ENCODE measurements at regions of chr17 and their contacts with region 1.

Region 1: DNA sequence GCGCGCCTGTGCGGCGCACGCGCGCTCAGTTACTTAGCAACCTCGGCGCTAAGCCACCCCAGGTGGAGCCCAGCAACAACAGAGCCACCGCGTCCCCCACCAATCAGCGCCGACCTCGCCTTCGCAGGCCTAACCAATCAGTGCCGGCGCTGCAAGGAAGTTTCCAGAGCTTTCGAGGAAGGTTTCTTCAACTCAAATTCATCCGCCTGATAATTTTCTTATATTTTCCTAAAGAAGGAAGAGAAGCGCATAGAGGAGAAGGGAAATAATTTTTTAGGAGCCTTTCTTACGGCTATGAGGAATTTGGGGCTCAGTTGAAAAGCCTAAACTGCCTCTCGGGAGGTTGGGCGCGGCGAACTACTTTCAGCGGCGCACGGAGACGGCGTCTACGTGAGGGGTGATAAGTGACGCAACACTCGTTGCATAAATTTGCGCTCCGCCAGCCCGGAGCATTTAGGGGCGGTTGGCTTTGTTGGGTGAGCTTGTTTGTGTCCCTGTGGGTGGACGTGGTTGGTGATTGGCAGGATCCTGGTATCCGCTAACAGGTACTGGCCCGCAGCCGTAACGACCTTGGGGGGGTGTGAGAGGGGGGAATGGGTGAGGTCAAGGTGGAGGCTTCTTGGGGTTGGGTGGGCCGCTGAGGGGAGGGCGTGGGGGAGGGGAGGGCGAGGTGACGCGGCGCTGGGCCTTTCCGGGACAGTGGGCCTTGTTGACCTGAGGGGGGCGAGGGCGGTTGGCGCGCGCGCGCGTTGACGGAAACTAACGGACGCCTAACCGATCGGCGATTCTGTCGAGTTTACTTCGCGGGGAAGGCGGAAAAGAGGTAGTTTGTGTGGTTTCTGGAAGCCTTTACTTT is at the start of gene UBB:
- DNase-seq: peak; percentile 98
- H3K4me3 Mint-ChIP-seq: peak within 1 kb of the TSS; percentile 90
- H3K27ac Mint-ChIP-seq: peak within 1 kb of the TSS; percentile 93
- H3K4me1 Mint-ChIP-seq: peaks cover 33% of the 10 kb centered on the region
- H3K27me3 Mint-ChIP-seq: no peaks in the 10 kb centered on the region
- total RNA-seq, gene UBB: 1,973 and 2,004 TPM in 2 replicates

Region 2: DNA sequence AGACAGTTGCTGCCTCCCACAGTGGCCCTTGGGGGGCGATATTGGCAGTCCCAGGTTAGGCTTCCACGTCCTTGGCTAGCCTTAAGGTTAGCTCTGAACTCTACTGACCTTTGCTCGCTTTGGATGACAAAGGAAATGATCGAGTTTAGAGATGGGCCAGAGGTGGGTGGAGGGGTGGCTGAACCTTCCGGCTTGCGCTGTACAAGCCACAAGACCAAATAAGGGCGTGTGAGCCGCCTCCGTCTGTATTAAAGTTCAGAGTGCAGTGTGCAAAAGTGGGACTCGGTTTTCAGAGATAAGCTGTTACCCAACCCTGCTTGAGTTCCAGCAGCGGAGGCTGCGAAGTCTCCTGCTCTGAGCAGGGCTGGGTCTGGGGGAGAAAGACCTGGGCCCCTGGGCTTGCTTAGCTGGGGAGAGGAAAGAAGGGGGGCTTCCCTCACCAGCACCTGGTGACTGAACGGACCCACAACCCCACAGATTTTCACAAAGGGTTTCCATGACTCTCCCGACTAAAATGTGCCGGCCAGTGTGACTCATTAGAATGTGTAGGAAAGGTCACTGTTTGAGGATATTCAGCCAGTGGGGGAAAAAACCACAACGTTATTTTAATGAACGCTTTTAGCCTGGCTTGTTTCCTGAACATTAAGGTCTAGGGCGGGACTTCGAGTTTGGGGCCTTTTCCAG is 94.8 kb before region 1 on chr17:
- intact Hi-C with region 1: loop called (anchors 1 kb)
- DNase-seq: peak; percentile 93
- H3K4me3 Mint-ChIP-seq: peak overlapping the region; percentile 83
- H3K27ac Mint-ChIP-seq: peak overlapping the region; percentile 99
- H3K4me1 Mint-ChIP-seq: peaks cover 51% of the 10 kb centered on the region
- H3K27me3 Mint-ChIP-seq: no peaks in the 10 kb centered on the region

Region 3: DNA sequence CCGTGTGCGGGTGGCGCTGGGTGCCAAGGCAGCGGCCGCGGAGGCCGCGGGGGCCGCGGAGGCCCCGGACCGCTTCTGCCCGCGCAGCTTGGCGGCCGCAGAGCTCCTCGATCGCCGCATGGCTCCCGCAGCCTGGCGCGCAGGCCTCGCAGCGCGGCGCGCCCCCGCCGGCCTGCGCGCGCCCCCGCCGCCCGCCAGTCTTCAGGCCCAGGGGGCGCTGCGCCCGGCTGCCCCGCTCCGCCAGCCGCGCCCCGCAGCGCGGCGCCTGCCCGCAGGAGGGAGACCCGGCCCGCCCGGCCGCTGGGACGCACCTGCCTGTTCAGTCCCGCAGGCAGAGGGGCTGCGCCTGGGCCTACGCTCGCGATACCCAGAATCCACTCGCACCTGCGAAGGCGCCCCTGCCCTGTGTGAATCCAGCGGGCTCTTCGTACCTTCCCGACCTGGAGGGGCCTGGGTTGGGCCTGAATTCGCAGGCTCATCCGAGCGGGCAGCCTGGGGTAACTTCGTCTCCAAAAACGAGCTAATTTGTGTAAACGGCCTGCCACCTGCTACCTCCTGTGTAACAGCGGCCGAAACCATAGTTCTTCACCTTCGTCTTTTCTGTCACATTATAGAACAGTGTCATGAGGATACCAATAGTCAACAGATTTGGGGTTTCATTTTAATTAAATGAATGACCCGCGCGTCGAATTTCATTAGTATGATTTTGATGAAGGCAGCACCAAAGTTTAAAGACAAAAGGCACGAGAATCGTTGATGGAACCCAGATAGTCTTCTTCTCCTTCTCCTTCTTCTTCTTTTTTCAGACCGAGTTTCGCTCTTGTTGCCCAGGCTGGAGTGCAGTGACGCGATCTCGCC is 27.3 kb before region 1 on chr17 and contains the start of gene CENPV:
- intact Hi-C with region 1: loop called (anchors 2 kb)
- DNase-seq: peak; percentile 89
- H3K4me3 Mint-ChIP-seq: peak within 1 kb of the TSS; percentile 88
- H3K27ac Mint-ChIP-seq: peak within 1 kb of the TSS; percentile 84
- H3K4me1 Mint-ChIP-seq: peaks cover 14% of the 10 kb centered on the region
- H3K27me3 Mint-ChIP-seq: peaks cover 19% of the 10 kb centered on the region
- total RNA-seq, gene CENPV: 52.8 and 53.0 TPM in 2 replicates

Region 4: GRCh38 chr17:16415031-16415924 is 34.4 kb after region 1 on chr17 and contains the start of gene TRPV2:
- intact Hi-C with region 1: loop called (anchors 1 kb)
- DNase-seq: peak; percentile 83
- H3K4me3 Mint-ChIP-seq: peak within 1 kb of the TSS; percentile 100
- H3K27ac Mint-ChIP-seq: peak within 1 kb of the TSS; percentile 100
- H3K4me1 Mint-ChIP-seq: peaks cover 41% of the 10 kb centered on the region
- H3K27me3 Mint-ChIP-seq: no peaks in the 10 kb centered on the region
- total RNA-seq, gene TRPV2: 29.6 and 38.7 TPM in 2 replicates

Region 5: GRCh38 chr17:16428098-16428882 is 47.4 kb after region 1 on chr17:
- intact Hi-C with region 1: no loop called
- DNase-seq: peak; percentile 75
- H3K4me3 Mint-ChIP-seq: no peak overlapping the region
- H3K27ac Mint-ChIP-seq: peak overlapping the region; percentile 37
- H3K4me1 Mint-ChIP-seq: no peaks in the 10 kb centered on the region
- H3K27me3 Mint-ChIP-seq: no peaks in the 10 kb centered on the region

Region 6: GRCh38 chr17:16438557-16439302 is 57.9 kb after region 1 on chr17:
- intact Hi-C with region 1: loop called (anchors 1 kb)
- DNase-seq: peak; percentile 98
- H3K4me3 Mint-ChIP-seq: peak overlapping the region; percentile 99
- H3K27ac Mint-ChIP-seq: peak overlapping the region; percentile 99
- H3K4me1 Mint-ChIP-seq: peaks cover 45% of the 10 kb centered on the region
- H3K27me3 Mint-ChIP-seq: no peaks in the 10 kb centered on the region

Region 7: GRCh38 chr17:16521070-16521727 is 140.3 kb after region 1 on chr17:
- intact Hi-C with region 1: loop called (anchors 2 kb)
- DNase-seq: peak; percentile 89
- H3K4me3 Mint-ChIP-seq: no peak overlapping the region
- H3K27ac Mint-ChIP-seq: no peak overlapping the region
- H3K4me1 Mint-ChIP-seq: peaks cover 8% of the 10 kb centered on the region
- H3K27me3 Mint-ChIP-seq: peaks cover 30% of the 10 kb centered on the region

Region 8: DNA sequence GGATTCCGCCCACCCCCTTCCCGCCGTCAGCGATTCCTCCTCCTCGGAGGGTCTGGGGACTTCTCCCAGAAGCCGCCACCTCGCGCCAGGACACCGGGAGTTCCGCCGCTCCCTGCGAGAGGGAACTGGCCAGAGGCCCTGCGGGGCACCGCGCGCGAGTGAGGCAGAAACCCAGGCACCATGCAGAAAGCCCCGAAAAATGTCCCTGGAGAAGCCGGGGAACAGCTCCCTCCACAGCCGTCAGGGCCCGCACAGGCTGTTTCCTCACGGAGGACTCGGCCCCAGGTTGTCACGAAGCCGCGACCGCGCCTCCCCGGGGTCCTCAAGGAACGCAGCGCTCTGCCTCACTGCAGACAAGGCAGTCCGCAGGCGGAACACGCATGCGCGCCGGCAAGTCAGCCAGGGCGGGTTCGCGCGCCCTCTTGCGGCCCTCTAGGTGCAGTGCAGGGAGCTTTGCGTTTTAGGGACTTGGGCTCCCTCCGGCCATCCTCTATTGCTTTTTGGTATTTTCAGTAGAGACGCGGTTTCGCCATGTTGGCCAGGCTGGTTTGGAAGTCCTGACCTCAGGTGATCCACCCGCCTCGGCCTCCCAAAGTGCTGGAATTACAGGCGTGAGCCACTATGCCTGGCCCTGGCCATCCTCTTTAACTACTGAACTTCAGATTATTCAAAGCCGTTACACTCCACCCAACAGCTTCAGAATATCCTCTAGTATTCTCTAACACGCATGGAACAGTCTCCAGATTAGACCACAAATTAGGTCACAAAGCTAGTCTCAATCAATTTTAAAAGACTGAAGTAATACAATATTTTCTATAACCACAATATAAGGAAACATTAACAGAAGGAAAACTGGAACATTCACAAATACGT is 208.5 kb after region 1 on chr17:
- intact Hi-C with region 1: no loop called
- DNase-seq: peak; percentile 98
- H3K4me3 Mint-ChIP-seq: peak overlapping the region; percentile 72
- H3K27ac Mint-ChIP-seq: no peak overlapping the region
- H3K4me1 Mint-ChIP-seq: peaks cover 6% of the 10 kb centered on the region
- H3K27me3 Mint-ChIP-seq: peaks cover 41% of the 10 kb centered on the region

Measured in activated CD4-positive, alpha-beta T cell treated with anti-CD3 and anti-CD28 coated beads, Interleukin-2, amount 10 ng/mL, durations not matched to agents 24 days and 14 days (primary cell).